ENCODE measurements at regions of chr6 and their contacts with region 1.

Region 1: GRCh38 chr6:24855395-24856245 is 56.9 kb upstream of the ARMH2 start:
- DNase-seq: peak; percentile 85
- H3K4me3 Mint-ChIP-seq: peak overlapping the region; percentile 36
- H3K27ac Mint-ChIP-seq: peak overlapping the region; percentile 95
- H3K4me1 Mint-ChIP-seq: peaks cover 56% of the 10 kb centered on the region
- H3K27me3 Mint-ChIP-seq: no peaks in the 10 kb centered on the region

Region 2: GRCh38 chr6:24883618-24884017 is 28.0 kb after region 1 on chr6:
- CTCF ChIA-PET with region 1: interaction called, 14 read pairs
- intact Hi-C with region 1: loop called (anchors 1 kb)
- DNase-seq: peak; percentile 82
- H3K4me3 Mint-ChIP-seq: peak overlapping the region; percentile 73
- H3K27ac Mint-ChIP-seq: peak overlapping the region; percentile 99
- H3K4me1 Mint-ChIP-seq: peaks cover 91% of the 10 kb centered on the region
- H3K27me3 Mint-ChIP-seq: no peaks in the 10 kb centered on the region

Region 3: GRCh38 chr6:24919004-24919892 is 63.6 kb after region 1 on chr6:
- CTCF ChIA-PET with region 1: interaction called, 58 read pairs
- intact Hi-C with region 1: loop called (anchors 1 kb)
- DNase-seq: peak; percentile 60
- H3K4me3 Mint-ChIP-seq: peak overlapping the region; percentile 57
- H3K27ac Mint-ChIP-seq: peak overlapping the region; percentile 95
- H3K4me1 Mint-ChIP-seq: peaks cover 90% of the 10 kb centered on the region
- H3K27me3 Mint-ChIP-seq: no peaks in the 10 kb centered on the region

Region 4: DNA sequence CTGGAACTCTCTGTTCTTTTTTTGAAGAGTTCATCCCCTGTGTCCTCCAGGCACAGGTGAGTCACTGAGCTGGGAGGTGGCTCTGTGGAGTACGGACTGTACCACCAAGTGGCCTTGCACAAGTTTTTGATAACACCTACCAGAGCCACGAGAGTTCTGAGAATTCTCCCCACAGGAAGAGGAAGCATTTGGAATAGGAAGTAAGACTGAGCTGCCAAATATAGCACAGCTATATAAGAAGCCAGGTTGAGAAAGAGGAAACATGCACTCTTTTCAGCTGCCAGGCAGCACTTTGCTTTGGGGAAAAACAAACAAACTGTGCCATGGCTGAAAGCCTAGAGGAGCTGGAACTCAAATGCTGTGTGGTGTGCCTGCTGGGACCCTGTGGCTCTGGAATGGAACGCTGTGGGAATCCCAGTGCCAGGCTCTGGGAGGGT is 151.0 kb after region 1 on chr6:
- CTCF ChIA-PET with region 1: interaction called, 3 read pairs
- intact Hi-C with region 1: loop called (anchors 1 kb)
- DNase-seq: peak; percentile 72
- H3K4me3 Mint-ChIP-seq: peak overlapping the region; percentile 31
- H3K27ac Mint-ChIP-seq: peak overlapping the region; percentile 68
- H3K4me1 Mint-ChIP-seq: peaks cover 80% of the 10 kb centered on the region
- H3K27me3 Mint-ChIP-seq: no peaks in the 10 kb centered on the region

Region 5: DNA sequence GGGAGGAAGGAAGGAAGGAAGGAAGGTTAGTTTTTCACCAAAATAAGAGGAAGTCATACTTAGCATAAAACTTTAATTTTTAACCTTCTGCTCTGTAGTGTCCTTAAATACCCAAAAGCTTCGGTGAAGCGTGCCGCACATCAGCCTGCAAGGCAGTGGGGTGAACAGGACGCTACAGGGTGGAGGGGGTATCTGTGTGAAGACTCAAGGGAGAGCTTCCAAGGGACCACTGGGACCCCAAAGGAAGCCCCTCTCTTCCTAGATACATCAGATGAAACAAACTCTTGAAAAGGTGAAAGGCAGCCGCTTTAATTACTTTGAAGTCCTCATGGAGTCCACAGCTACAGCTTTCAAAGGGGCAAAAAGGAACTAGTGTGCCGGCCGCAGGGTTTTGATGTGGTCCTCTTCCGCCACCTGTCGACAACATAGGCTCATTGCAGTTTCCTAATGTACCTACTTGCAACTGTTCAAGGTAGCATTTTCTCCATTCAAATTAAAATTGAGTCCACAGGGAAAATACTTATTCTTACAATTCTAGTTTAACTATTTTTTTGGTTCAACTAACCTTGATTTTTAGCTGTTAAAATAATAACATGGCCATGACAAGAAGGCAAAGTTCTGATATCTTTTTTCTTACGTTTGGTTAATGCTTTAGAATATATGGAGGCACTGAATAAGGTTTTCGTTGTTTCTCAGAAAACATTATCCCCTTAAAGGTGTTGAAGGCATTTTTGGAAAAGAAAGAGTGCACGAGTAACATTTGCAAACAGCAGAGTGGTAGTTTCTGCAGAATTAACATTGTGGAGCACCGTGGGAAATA is 215.1 kb after region 1 on chr6:
- CTCF ChIA-PET with region 1: interaction called, 9 read pairs
- intact Hi-C with region 1: loop called (anchors 1 kb)
- DNase-seq: peak; percentile 91
- H3K4me3 Mint-ChIP-seq: peak overlapping the region; percentile 38
- H3K27ac Mint-ChIP-seq: peak overlapping the region; percentile 70
- H3K4me1 Mint-ChIP-seq: peaks cover 10% of the 10 kb centered on the region
- H3K27me3 Mint-ChIP-seq: no peaks in the 10 kb centered on the region

Measured in activated naive CD4-positive, alpha-beta T cell treated with anti-CD3 and anti-CD28 coated beads for 36 hours (primary cell).